Caco-2 (cell line): ENCODE measurements at regions of chr16 and their contacts with region 1.

Region 1: GRCh38 chr16:22898874-22899348 is 84.9 kb downstream of the HS3ST2 start:
- DNase-seq: peak; percentile 54 to 69
- H3K4me3 ChIP-seq: no peak overlapping the region
- H3K4me3 Mint-ChIP-seq: no peak overlapping the region
- H3K27ac Mint-ChIP-seq: no peak overlapping the region
- H3K4me1 ChIP-seq: no peaks in the 10 kb centered on the region
- H3K4me1 Mint-ChIP-seq: no peaks in the 10 kb centered on the region
- H3K27me3 ChIP-seq: no peaks in the 10 kb centered on the region; the same call in 1 of the 2 replicates
- H3K27me3 Mint-ChIP-seq: peaks cover 13% of the 10 kb centered on the region
- CTCF ChIP-seq: peak; percentile 71 to 72

Region 2: GRCh38 chr16:22646948-22647556 is 251.9 kb before region 1 on chr16:
- CTCF ChIA-PET with region 1: no interaction called
- POLR2A ChIA-PET with region 1: no interaction called
- intact Hi-C with region 1: no loop called
- DNase-seq: no peak
- H3K4me3 ChIP-seq: no peak overlapping the region
- H3K4me3 Mint-ChIP-seq: no peak overlapping the region
- H3K27ac Mint-ChIP-seq: no peak overlapping the region
- H3K4me1 ChIP-seq: no peaks in the 10 kb centered on the region
- H3K4me1 Mint-ChIP-seq: no peaks in the 10 kb centered on the region
- H3K27me3 ChIP-seq: no peaks in the 10 kb centered on the region
- H3K27me3 Mint-ChIP-seq: no peaks in the 10 kb centered on the region
- CTCF ChIP-seq: no peak

Region 3: GRCh38 chr16:22912654-22913053 is 13.7 kb after region 1 on chr16:
- CTCF ChIA-PET with region 1: no interaction called
- POLR2A ChIA-PET with region 1: no interaction called
- intact Hi-C with region 1: no loop called
- DNase-seq: no peak
- H3K4me3 ChIP-seq: no peak overlapping the region
- H3K4me3 Mint-ChIP-seq: no peak overlapping the region
- H3K27ac Mint-ChIP-seq: no peak overlapping the region
- H3K4me1 ChIP-seq: no peaks in the 10 kb centered on the region
- H3K4me1 Mint-ChIP-seq: no peaks in the 10 kb centered on the region
- H3K27me3 ChIP-seq: no peaks in the 10 kb centered on the region
- H3K27me3 Mint-ChIP-seq: peaks cover 9% of the 10 kb centered on the region
- CTCF ChIP-seq: no peak

Region 4: DNA sequence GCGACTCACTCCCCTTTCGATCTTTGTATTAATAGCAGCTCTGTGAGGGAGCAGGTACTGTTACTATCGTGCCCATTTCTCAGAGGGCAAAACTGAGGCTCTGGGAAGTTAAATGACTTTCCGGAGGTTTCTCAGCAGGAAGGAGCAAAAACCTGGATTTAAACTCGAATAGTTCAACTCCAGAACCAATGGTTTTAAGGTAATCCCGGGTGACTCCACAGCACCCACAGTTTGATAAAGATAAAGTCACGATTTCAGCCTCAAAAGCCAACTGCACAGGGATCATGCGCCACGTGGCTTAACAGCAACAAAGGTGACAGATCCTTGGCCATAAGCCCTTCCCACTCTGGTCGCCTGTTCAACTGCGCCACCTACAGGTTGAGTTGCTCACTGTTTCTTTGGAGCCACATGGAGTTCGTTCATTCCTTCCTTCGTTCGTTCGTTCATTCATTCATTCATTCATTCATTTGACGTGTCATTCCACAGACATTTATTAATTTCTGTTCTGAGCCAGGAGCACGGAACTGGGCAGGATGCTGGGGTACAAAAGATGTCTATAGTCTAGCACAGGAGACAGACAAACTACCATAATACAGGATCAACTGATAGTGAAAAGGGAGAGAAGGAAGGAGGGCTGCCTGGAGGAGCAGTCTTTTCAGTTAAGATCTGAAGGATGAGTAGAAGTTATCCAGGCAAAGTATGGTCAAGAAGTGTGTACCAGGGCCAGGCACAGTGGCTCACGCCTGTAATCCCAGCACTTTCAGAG is 49.9 kb after region 1 on chr16:
- CTCF ChIA-PET with region 1: no interaction called
- POLR2A ChIA-PET with region 1: no interaction called
- intact Hi-C with region 1: loop called (anchors 2 kb)
- DNase-seq: peak; percentile 61 to 67
- H3K4me3 ChIP-seq: no peak overlapping the region
- H3K4me3 Mint-ChIP-seq: no peak overlapping the region
- H3K27ac Mint-ChIP-seq: no peak overlapping the region
- H3K4me1 ChIP-seq: no peaks in the 10 kb centered on the region
- H3K4me1 Mint-ChIP-seq: no peaks in the 10 kb centered on the region
- H3K27me3 ChIP-seq: no peaks in the 10 kb centered on the region
- H3K27me3 Mint-ChIP-seq: peaks cover 12% of the 10 kb centered on the region
- CTCF ChIP-seq: peak; percentile 56 to 62

Region 5: DNA sequence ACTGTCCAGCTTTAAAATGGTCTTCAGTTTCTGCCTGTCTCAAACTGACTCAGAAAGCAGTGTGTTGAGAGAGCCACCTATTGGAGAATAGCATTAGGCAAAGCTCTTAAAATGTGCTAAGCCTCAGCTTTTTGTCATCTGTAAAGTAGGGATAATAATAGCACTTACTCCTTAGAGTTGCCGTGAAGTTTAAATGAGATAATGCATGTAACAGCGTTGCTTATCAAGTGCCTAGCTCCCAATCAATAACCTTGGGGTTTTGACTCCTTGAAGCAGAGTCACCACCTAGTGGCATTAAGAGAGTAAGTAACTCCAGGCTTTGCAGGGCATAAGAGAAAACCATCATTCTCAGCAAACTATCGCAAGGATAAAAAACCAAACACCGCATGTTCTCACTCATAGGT is 78.4 kb after region 1 on chr16:
- CTCF ChIA-PET with region 1: no interaction called
- POLR2A ChIA-PET with region 1: no interaction called
- intact Hi-C with region 1: loop called (anchors 2 kb)
- DNase-seq: no peak
- H3K4me3 ChIP-seq: no peak overlapping the region
- H3K4me3 Mint-ChIP-seq: no peak overlapping the region
- H3K27ac Mint-ChIP-seq: no peak overlapping the region
- H3K4me1 ChIP-seq: no peaks in the 10 kb centered on the region
- H3K4me1 Mint-ChIP-seq: no peaks in the 10 kb centered on the region
- H3K27me3 ChIP-seq: no peaks in the 10 kb centered on the region
- H3K27me3 Mint-ChIP-seq: peaks cover 7% of the 10 kb centered on the region
- CTCF ChIP-seq: peak in 1 of 2 experiments; percentile 4

Region 6: GRCh38 chr16:23013481-23013880 is 114.6 kb after region 1 on chr16:
- CTCF ChIA-PET with region 1: no interaction called
- POLR2A ChIA-PET with region 1: no interaction called
- intact Hi-C with region 1: loop called (anchors 2 kb)
- DNase-seq: peak in 1 of 2 experiments; percentile 3
- H3K4me3 ChIP-seq: no peak overlapping the region
- H3K4me3 Mint-ChIP-seq: no peak overlapping the region
- H3K27ac Mint-ChIP-seq: no peak overlapping the region
- H3K4me1 ChIP-seq: no peaks in the 10 kb centered on the region
- H3K4me1 Mint-ChIP-seq: no peaks in the 10 kb centered on the region
- H3K27me3 ChIP-seq: no peaks in the 10 kb centered on the region
- H3K27me3 Mint-ChIP-seq: peaks cover 13% of the 10 kb centered on the region
- CTCF ChIP-seq: peak in 1 of 2 experiments; percentile 19

Region 7: GRCh38 chr16:23060458-23061320 is 161.8 kb after region 1 on chr16:
- CTCF ChIA-PET with region 1: no interaction called
- POLR2A ChIA-PET with region 1: no interaction called
- intact Hi-C with region 1: loop called (anchors 1 kb)
- DNase-seq: peak; percentile 64 to 72
- H3K4me3 ChIP-seq: no peak overlapping the region
- H3K4me3 Mint-ChIP-seq: no peak overlapping the region
- H3K27ac Mint-ChIP-seq: no peak overlapping the region
- H3K4me1 ChIP-seq: no peaks in the 10 kb centered on the region
- H3K4me1 Mint-ChIP-seq: peaks cover 6% of the 10 kb centered on the region
- H3K27me3 ChIP-seq: no peaks in the 10 kb centered on the region
- H3K27me3 Mint-ChIP-seq: peaks cover 15% of the 10 kb centered on the region
- CTCF ChIP-seq: peak; percentile 68 to 80